Endothelial cell of umbilical vein (primary cell): ENCODE measurements at regions of chr10 and their contacts with region 1.

Region 1: GRCh38 chr10:11757821-11758463 is 15.8 kb downstream of the ECHDC3 start:
- DNase-seq: peak; percentile 84
- H3K4me3 ChIP-seq: no peak overlapping the region
- H3K27ac ChIP-seq: peak overlapping the region; percentile 60
- H3K4me1 ChIP-seq: peaks cover 10% of the 10 kb centered on the region
- H3K27me3 ChIP-seq: no peaks in the 10 kb centered on the region
- CTCF ChIP-seq: peak; percentile 95
- POLR2A ChIP-seq: no peak

Region 2: GRCh38 chr10:11424456-11425297 is 333.3 kb before region 1 on chr10:
- CTCF ChIA-PET with region 1: interaction called, 57 read pairs
- POLR2A ChIA-PET with region 1: no interaction called
- dilution Hi-C with region 1: no loop called
- intact Hi-C with region 1: loop called (anchors 1 kb)
- DNase-seq: peak; percentile 56
- H3K4me3 ChIP-seq: no peak overlapping the region
- H3K27ac ChIP-seq: no peak overlapping the region
- H3K4me1 ChIP-seq: no peaks in the 10 kb centered on the region
- H3K27me3 ChIP-seq: peaks cover 0 to 2% of the 10 kb centered on the region in 2 experiments
- CTCF ChIP-seq: peak; percentile 86 to 88
- POLR2A ChIP-seq: no peak

Region 3: DNA sequence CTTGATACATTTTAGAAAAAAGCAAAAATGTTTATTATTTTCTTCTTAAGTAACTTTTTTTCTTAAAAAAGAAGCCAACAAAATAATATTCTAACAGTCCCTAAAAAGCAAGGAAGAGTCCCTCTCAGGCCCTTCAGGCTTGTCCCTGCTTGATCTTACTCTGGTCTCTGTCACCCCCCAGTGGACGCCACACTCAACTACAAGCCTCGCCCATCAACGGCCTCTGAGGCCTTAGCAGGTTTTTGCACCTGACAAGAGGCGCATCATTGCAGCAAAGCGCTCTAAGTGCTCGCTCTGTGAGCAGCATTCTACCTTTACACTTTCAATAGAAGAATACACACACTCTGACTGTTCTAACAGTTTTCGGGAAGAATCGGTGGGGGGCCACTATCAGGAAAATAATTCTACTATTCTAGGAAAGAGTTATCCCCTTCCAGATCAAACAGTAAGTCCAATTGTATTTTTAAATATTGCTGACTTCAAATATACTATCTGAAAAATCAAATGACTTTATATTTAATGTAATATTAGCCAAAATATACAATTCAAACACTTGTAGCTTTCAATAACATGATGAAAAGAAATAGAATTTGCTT is 285.7 kb before region 1 on chr10:
- CTCF ChIA-PET with region 1: no interaction called
- POLR2A ChIA-PET with region 1: no interaction called
- dilution Hi-C with region 1: no loop called
- intact Hi-C with region 1: no loop called
- DNase-seq: peak; percentile 40
- H3K4me3 ChIP-seq: no peak overlapping the region
- H3K27ac ChIP-seq: no peak overlapping the region
- H3K4me1 ChIP-seq: peaks cover 10% of the 10 kb centered on the region
- H3K27me3 ChIP-seq: no peaks in the 10 kb centered on the region
- CTCF ChIP-seq: peak; percentile 62 to 64
- POLR2A ChIP-seq: no peak

Region 4: GRCh38 chr10:11499425-11500071 is 258.4 kb before region 1 on chr10:
- CTCF ChIA-PET with region 1: interaction called, 10 read pairs
- POLR2A ChIA-PET with region 1: no interaction called
- dilution Hi-C with region 1: loop called (anchors 25 kb)
- intact Hi-C with region 1: no loop called
- DNase-seq: no peak
- H3K4me3 ChIP-seq: no peak overlapping the region
- H3K27ac ChIP-seq: no peak overlapping the region
- H3K4me1 ChIP-seq: no peaks in the 10 kb centered on the region
- H3K27me3 ChIP-seq: no peaks in the 10 kb centered on the region
- CTCF ChIP-seq: no peak
- POLR2A ChIP-seq: no peak

Region 5: GRCh38 chr10:11515596-11516430 is 242.1 kb before region 1 on chr10:
- CTCF ChIA-PET with region 1: interaction called, 63 read pairs
- POLR2A ChIA-PET with region 1: interaction called, 3 read pairs
- dilution Hi-C with region 1: loop called (anchors 25 kb)
- intact Hi-C with region 1: loop called (anchors 1 kb)
- DNase-seq: peak; percentile 70
- H3K4me3 ChIP-seq: no peak overlapping the region
- H3K27ac ChIP-seq: no peak overlapping the region
- H3K4me1 ChIP-seq: peaks cover 10% of the 10 kb centered on the region
- H3K27me3 ChIP-seq: no peaks in the 10 kb centered on the region
- CTCF ChIP-seq: peak; percentile 63 to 73
- POLR2A ChIP-seq: no peak

Region 6: GRCh38 chr10:11521860-11522259 is 236.1 kb before region 1 on chr10:
- CTCF ChIA-PET with region 1: interaction called, 25 read pairs
- POLR2A ChIA-PET with region 1: no interaction called
- dilution Hi-C with region 1: loop called (anchors 25 kb)
- intact Hi-C with region 1: no loop called
- DNase-seq: no peak
- H3K4me3 ChIP-seq: no peak overlapping the region
- H3K27ac ChIP-seq: no peak overlapping the region
- H3K4me1 ChIP-seq: peaks cover 6% of the 10 kb centered on the region
- H3K27me3 ChIP-seq: no peaks in the 10 kb centered on the region
- CTCF ChIP-seq: no peak
- POLR2A ChIP-seq: no peak

Region 7: DNA sequence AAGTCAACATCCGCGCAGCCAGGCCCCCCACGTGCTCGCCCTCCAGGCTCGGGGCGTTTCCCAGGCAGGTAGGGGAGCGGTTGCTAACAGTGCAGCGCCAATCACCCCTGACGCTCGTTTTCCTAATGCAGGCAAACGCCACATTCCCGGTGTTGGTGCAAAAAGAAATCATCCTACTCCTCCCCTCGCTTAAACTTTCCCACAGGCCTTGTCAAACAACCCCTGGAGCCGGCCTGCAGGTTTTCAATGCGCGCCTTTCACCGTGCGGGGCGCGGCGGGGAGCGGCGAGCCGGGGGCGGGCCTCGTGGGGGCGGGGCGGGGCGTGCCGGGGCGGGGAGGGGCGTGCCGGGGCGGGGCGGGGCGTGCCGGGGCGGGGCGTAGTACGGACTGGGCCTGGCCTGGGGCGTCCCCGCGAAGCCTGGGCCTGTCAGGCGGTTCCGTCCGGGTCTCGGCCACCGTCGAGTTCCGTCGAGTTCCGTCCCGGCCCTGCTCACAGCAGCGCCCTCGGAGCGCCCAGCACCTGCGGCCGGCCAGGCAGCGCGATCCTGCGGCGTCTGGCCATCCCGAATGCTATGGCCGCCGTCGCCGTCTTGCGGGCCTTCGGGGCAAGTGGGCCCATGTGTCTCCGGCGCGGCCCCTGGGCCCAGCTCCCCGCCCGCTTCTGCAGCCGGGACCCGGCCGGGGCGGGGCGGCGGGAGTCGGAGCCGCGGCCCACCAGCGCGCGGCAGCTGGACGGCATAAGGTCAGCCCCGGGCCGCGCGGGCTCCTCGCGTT is 15.8 kb before region 1 on chr10 and contains the start of gene ECHDC3:
- CTCF ChIA-PET with region 1: interaction called, 18 read pairs
- POLR2A ChIA-PET with region 1: no interaction called
- dilution Hi-C with region 1: no loop called
- intact Hi-C with region 1: no loop called
- DNase-seq: peak; percentile 47
- H3K4me3 ChIP-seq: peak within 1 kb of the TSS in 2 of 3 experiments; percentile 50 to 52
- H3K27ac ChIP-seq: no peak within 1 kb of the TSS
- H3K4me1 ChIP-seq: peaks cover 3% of the 10 kb centered on the region
- H3K27me3 ChIP-seq: peaks cover 0 to 2% of the 10 kb centered on the region in 2 experiments
- CTCF ChIP-seq: no peak
- POLR2A ChIP-seq: no peak
- total RNA-seq, gene ECHDC3: 3.7 and 6.0 TPM in 2 replicates